Activated CD4-positive, alpha-beta memory T cell treated with anti-CD3 and anti-CD28 coated beads for 36 hours (primary cell): ENCODE measurements at regions of chrX and their contacts with region 1.

Region 1: GRCh38 chrX:120244735-120245498 is 5.7 kb upstream of the ZBTB33 start:
- DNase-seq: peak; percentile 75
- H3K4me3 Mint-ChIP-seq: peak overlapping the region; percentile 94
- H3K27ac Mint-ChIP-seq: peak overlapping the region; percentile 86
- H3K4me1 Mint-ChIP-seq: peaks cover 21% of the 10 kb centered on the region
- H3K27me3 Mint-ChIP-seq: no peaks in the 10 kb centered on the region

Region 2: DNA sequence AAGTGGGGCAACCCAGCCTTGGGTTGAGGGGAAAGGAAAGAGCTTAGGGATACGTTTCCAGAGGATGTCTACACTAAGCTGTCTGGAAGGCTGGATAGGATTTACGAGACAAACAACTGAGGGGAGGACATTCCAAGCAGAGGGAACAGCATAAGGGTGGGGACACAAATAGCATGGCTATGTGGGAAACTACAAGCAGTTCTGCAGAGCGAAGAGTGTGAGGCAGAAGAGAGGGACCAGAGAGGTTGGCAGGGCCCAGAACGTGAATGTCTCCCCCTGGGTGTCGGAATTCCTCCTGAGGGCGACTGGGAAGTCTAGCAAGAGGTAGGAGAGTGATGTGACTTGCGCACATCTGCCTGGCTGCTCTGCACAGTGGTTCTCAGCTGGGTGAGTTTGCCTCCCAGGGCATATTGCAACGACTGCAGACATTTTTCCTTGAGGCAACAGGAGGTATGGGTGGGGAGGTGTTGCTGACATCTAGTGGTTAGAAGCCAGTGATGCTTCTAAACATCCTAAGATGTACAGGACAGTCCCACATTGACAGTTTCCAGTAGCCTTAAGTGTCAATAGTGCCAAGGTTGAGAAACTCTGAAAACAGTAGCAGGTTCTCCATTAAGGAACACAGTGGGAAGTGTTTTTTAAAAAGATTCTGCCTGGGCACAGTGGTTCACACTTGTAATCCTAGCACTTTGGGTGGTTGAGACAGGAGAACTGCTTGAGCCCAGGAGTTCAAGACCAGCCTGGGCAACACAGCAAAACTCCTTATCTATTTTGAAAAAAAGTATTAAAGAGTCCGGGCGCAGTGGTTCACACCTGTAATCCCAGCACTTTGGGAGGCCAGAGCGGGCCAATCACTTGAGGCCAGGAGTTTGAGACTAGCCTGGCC is 364.1 kb before region 1 on chrX:
- CTCF ChIA-PET with region 1: no interaction called
- POLR2A ChIA-PET with region 1: no interaction called
- intact Hi-C with region 1: loop called (anchors 10 kb)
- DNase-seq: peak; percentile 34
- H3K4me3 Mint-ChIP-seq: no peak overlapping the region
- H3K27ac Mint-ChIP-seq: peak overlapping the region; percentile 5
- H3K4me1 Mint-ChIP-seq: peaks cover 9% of the 10 kb centered on the region
- H3K27me3 Mint-ChIP-seq: no peaks in the 10 kb centered on the region

Region 3: DNA sequence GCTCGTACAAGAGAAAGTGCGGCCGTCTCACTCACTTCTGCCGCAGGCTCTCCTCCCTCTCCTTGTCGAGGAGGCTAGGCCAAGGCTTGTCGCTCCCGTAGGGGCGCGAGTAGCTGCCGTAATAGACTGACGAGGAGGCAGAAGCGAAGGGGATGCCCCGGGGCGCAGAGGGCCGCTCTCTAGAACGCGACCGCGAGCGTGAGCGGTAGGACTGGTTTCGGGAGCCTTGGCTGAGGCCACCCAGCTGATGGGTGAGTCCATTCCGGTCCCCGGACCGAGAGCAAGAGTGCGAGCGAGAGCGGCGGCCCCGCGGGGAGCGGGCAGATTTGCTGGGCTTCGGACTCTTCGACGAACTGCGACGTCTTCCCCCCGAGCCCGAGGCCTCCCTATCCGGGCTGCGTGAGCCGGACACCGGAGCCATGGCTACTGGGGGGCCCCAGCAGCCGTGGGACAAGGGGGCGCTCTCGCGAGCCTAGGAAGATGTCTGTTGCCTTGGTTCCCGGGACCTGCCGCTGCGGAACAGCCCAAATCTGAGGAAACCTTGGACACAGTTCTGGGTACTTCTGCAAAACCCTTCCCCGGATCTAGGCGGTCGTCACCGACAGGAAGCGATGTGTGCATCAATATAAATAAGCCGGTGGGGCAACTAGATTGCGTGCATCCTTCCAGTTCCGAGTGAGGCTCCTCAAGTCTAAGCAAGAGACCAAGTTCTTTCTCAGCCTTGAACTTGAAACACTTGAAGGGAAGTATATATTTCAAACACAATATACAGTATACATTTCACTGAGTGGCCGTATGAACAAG is 301.5 kb before region 1 on chrX and contains the start of gene NKAP:
- CTCF ChIA-PET with region 1: no interaction called
- POLR2A ChIA-PET with region 1: no interaction called
- intact Hi-C with region 1: loop called (anchors 1 kb)
- DNase-seq: peak; percentile 89
- H3K4me3 Mint-ChIP-seq: peak within 1 kb of the TSS; percentile 89
- H3K27ac Mint-ChIP-seq: peak within 1 kb of the TSS; percentile 93
- H3K4me1 Mint-ChIP-seq: peaks cover 15% of the 10 kb centered on the region
- H3K27me3 Mint-ChIP-seq: no peaks in the 10 kb centered on the region
- total RNA-seq, gene NKAP: 10.8 to 11.7 TPM

Region 4: DNA sequence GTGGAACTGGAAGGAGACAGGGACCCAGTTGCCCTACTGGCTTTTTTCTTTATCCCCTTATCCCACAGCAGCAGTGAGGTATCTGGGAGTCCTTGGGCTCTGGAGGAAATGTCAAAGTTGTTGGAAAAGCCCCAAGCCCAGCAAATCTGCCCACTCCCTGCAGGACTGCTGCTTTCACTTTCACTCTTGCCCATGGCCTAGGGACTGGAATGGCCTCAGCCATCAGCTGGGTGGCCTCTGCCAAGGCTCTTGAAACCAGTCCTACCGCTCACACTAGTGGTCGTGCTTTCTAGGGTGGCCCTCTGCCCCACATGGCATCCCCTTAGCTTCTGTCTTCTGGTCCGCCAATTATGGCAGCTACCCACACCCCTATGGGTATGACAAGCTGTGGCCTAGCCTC is 119.5 kb before region 1 on chrX:
- CTCF ChIA-PET with region 1: no interaction called
- POLR2A ChIA-PET with region 1: no interaction called
- intact Hi-C with region 1: no loop called
- DNase-seq: no peak
- H3K4me3 Mint-ChIP-seq: no peak overlapping the region
- H3K27ac Mint-ChIP-seq: no peak overlapping the region
- H3K4me1 Mint-ChIP-seq: no peaks in the 10 kb centered on the region
- H3K27me3 Mint-ChIP-seq: no peaks in the 10 kb centered on the region